K562 (cell line): ENCODE measurements at regions of chr7 and their contacts with region 1.

Region 1: DNA sequence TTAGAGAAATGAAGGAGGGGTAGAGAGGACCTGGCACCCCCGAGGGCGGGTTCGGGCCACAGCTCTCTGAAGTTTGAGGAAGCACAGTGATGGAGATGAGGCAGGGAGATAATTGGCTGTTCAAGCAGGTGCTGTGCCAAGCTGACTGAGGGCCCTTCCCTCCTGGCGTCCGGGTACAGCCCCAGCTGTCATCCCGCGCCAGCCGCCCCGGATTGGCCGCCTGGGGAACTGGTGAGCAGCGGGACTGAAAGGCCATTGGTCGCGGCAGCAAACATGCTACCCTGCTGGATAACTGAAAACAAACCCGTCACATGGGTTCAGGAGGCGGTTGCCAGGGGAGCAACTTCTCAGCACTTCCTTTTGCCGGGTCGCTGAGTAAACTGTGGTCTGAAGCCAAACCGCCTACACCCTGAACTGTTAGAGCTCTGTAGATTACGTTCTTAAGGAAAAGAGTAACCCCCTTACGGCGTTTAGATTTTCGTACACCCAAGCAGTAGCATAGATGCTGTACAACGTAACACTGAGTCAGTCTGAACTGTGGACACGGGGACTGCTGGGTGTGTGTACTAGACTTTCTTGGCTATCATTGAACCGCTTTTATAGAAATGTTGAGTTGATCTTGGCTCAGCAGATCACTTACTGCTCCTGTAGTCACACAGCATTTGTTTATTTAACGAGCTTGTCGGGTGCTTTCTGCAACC is 1.3 kb downstream of the INSIG1 start:
- DNase-seq: peak; percentile 90 to 95 (median 92)
- ATAC-seq: peak; percentile 75
- H3K4me3 ChIP-seq: peak overlapping the region; percentile 76
- H3K27ac ChIP-seq: peak overlapping the region; percentile 69
- H3K4me1 ChIP-seq: peaks cover 46 to 54% of the 10 kb centered on the region in 2 experiments
- H3K27me3 ChIP-seq: no peaks in the 10 kb centered on the region
- CTCF ChIP-seq: no peak
- EP300 ChIP-seq: peak; percentile 3; the same call in 1 of the 2 replicates
- POLR2A ChIP-seq: peak; percentile 37; the same call in 1 of the 2 replicates
- RAD21 ChIP-seq: no peak

Region 2: DNA sequence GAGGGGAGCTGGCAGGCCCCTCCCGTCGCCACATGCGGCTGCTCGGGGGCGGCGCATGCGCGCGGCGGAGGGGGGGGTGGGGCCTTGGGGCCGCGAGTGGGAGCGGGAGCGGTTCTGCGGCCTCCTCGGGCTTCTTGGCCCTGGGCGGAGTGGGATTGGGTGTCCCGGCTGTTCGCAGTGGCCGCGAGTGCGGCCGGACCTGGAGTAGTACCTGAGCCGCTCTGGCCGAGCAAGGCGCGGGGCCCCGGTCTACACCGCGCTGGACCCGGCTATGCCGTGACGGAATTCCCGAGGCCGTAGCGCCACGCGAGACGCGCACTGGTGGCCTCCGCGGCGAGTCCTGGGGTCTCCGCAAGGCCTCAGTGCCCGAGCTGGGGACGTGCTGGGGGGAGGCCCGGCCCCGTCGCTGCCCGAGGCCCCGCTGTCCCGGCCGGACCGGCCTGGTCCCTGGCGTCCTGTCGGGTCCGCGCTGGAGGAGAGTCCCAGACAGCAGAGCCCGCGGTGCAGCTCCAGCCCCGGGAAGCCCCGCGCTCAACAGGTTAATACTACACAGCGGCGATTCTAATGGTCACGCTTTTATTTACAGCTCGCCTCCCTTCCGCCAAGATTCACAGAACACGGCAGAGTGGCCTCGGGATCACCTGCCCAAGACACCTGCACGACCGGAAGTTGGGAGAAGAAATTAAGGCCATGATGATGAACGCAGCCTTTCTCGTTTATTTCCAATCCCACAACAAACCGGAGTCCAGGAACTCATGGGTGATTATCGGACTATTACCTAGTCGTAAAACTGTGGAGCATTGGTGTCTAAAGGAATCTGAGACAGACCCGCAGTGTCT is 295.4 kb before region 1 on chr7:
- CTCF ChIA-PET with region 1: no interaction called
- POLR2A ChIA-PET with region 1: no interaction called
- in situ Hi-C with region 1: no loop called
- intact Hi-C with region 1: loop called (anchors 5 kb)
- DNase-seq: peak; percentile 90 to 99 (median 99)
- ATAC-seq: peak; percentile 82
- H3K4me3 ChIP-seq: peak overlapping the region; percentile 84
- H3K27ac ChIP-seq: peak overlapping the region; percentile 95
- H3K4me1 ChIP-seq: peaks cover 17 to 19% of the 10 kb centered on the region in 2 experiments
- H3K27me3 ChIP-seq: no peaks in the 10 kb centered on the region
- CTCF ChIP-seq: no peak
- EP300 ChIP-seq: no peak
- POLR2A ChIP-seq: peak; percentile 90
- RAD21 ChIP-seq: no peak

Region 3: DNA sequence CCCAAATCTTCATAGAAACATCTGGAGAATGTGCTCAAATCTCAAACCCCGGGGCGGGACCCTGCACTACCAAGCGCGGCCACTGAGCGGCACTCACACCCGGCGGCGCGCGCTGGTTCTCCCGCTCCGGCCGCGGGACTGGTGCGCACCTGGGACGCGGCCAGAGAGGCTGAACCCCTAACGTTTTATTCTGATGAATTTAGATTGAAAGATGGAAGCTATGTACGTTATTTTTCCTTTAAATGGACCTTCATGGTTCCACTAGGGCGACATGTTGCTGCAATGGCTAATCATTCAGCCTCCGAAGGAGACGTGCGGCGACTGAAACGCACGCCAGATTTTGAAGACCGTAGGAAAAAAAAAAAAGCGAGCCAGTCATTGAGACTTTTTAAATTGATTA is 108.3 kb before region 1 on chr7:
- CTCF ChIA-PET with region 1: interaction called, 5 read pairs
- POLR2A ChIA-PET with region 1: no interaction called
- in situ Hi-C with region 1: no loop called
- intact Hi-C with region 1: loop called (anchors 2 kb)
- DNase-seq: peak; percentile 72 to 92 (median 89)
- ATAC-seq: peak; percentile 93
- H3K4me3 ChIP-seq: no peak overlapping the region
- H3K27ac ChIP-seq: no peak overlapping the region
- H3K4me1 ChIP-seq: peaks cover 0 to 7% of the 10 kb centered on the region in 2 experiments; a peak in 2 of 5 replicates
- H3K27me3 ChIP-seq: peaks cover 36 to 62% of the 10 kb centered on the region in 2 experiments
- CTCF ChIP-seq: peak; percentile 92 to 97 (median 95)
- EP300 ChIP-seq: no peak
- POLR2A ChIP-seq: no peak
- RAD21 ChIP-seq: peak; percentile 96 to 97

Region 4: GRCh38 chr7:155205368-155206317 is 93.3 kb before region 1 on chr7:
- CTCF ChIA-PET with region 1: no interaction called
- POLR2A ChIA-PET with region 1: interaction called, 26 read pairs
- in situ Hi-C with region 1: loop called (anchors 5 kb)
- intact Hi-C with region 1: loop called (anchors 1 kb)
- DNase-seq: peak; percentile 99 to 100 (median 100)
- ATAC-seq: peak; percentile 94
- H3K4me3 ChIP-seq: peak overlapping the region; percentile 56
- H3K27ac ChIP-seq: peak overlapping the region; percentile 100
- H3K4me1 ChIP-seq: peaks cover 25 to 67% of the 10 kb centered on the region in 2 experiments
- H3K27me3 ChIP-seq: no peaks in the 10 kb centered on the region; a peak in 1 of 5 replicates
- CTCF ChIP-seq: peak in 1 of 3 experiments; percentile 29; a peak in 1 of 6 replicates
- EP300 ChIP-seq: peak; percentile 82
- POLR2A ChIP-seq: peak; percentile 96
- RAD21 ChIP-seq: peak; percentile 22 to 36; a peak in 3 of 4 replicates

Region 5: DNA sequence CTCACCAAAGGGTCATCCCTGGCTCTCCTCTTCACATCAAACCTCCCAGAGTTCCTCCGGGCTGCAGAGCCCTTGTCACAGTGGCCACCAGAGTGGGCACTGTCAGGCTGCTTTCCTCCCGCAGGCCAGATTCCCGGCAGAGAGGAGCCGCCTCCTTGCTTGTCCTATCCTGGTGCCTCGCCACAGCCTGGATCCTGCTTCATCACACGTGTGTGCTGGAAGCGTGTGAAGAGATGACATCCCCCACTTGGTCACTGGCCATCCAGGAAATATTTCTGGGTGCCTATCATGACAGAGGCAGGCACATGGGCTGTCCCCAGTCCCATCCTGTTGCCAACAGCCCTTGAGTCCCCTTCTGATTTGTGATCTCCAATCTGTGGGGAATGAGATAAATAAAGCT is 13.6 kb after region 1 on chr7:
- CTCF ChIA-PET with region 1: no interaction called
- POLR2A ChIA-PET with region 1: interaction called, 18 read pairs
- in situ Hi-C with region 1: no loop called
- intact Hi-C with region 1: no loop called
- DNase-seq: no peak
- ATAC-seq: peak; percentile 7; the same call in 1 of the 3 replicates
- H3K4me3 ChIP-seq: no peak overlapping the region
- H3K27ac ChIP-seq: no peak overlapping the region
- H3K4me1 ChIP-seq: peaks cover 9 to 20% of the 10 kb centered on the region in 2 experiments; a peak in 4 of 5 replicates
- H3K27me3 ChIP-seq: peaks cover 3 to 36% of the 10 kb centered on the region in 2 experiments; a peak in 4 of 5 replicates
- CTCF ChIP-seq: no peak
- EP300 ChIP-seq: no peak
- POLR2A ChIP-seq: no peak
- RAD21 ChIP-seq: no peak

Region 6: GRCh38 chr7:155322530-155322929 is 23.5 kb after region 1 on chr7:
- CTCF ChIA-PET with region 1: no interaction called
- POLR2A ChIA-PET with region 1: interaction called, 12 read pairs
- in situ Hi-C with region 1: no loop called
- intact Hi-C with region 1: loop called (anchors 1 kb)
- DNase-seq: no peak
- ATAC-seq: no peak
- H3K4me3 ChIP-seq: no peak overlapping the region
- H3K27ac ChIP-seq: no peak overlapping the region
- H3K4me1 ChIP-seq: peaks cover 4 to 16% of the 10 kb centered on the region in 2 experiments
- H3K27me3 ChIP-seq: peaks cover 0 to 21% of the 10 kb centered on the region in 2 experiments; a peak in 3 of 5 replicates
- CTCF ChIP-seq: no peak
- EP300 ChIP-seq: no peak
- POLR2A ChIP-seq: no peak
- RAD21 ChIP-seq: no peak

Region 7: DNA sequence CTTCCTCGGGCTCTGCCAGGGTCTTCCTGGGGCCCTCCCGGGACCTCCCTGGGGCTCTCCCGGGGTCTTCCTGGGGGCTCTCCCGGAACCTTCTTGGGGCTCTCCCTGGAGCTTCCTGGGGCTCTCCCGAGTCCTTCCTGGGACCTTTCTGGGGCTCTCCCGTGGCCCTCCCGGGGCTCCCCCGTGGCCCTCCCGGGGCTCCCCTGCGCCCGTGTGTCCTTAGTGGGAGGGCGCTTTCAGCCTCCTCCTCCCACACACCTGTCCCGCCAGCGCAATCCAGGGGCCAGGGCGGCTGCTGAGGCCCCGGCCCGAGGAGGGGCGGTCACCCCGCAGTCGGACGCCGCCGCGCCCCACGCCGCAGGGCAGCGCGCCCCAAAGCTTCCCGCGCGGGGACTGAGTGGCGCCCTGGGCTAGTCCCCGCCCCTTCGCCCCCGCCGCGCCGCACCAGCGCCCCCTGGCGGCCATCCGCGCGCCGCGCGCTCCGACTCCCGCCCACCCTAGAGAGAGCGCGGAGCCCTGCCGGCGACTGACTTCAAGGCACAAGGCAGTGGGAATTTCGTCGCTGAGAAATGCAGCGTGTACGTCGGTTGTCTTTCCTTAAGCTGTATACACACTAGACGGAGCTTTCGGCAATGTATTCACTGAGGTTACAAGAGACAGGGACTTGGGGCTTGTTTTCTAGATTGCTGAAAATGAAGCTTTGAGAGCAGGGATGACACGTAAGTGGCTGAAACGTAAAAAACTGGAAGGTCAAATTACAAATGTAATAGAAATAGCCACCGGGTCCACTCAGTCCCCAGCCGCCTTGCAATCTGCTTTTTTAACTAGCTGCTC is 45.8 kb after region 1 on chr7:
- CTCF ChIA-PET with region 1: no interaction called
- POLR2A ChIA-PET with region 1: no interaction called
- in situ Hi-C with region 1: no loop called
- intact Hi-C with region 1: loop called (anchors 2 kb)
- DNase-seq: peak; percentile 90 to 99 (median 96)
- ATAC-seq: peak; percentile 98
- H3K4me3 ChIP-seq: peak overlapping the region; percentile 46
- H3K27ac ChIP-seq: no peak overlapping the region
- H3K4me1 ChIP-seq: peaks cover 0 to 17% of the 10 kb centered on the region in 2 experiments; a peak in 3 of 5 replicates
- H3K27me3 ChIP-seq: peaks cover 29 to 48% of the 10 kb centered on the region in 2 experiments
- CTCF ChIP-seq: peak; percentile 86 to 97 (median 96)
- EP300 ChIP-seq: no peak
- POLR2A ChIP-seq: no peak
- RAD21 ChIP-seq: peak; percentile 95 to 96

Region 8: DNA sequence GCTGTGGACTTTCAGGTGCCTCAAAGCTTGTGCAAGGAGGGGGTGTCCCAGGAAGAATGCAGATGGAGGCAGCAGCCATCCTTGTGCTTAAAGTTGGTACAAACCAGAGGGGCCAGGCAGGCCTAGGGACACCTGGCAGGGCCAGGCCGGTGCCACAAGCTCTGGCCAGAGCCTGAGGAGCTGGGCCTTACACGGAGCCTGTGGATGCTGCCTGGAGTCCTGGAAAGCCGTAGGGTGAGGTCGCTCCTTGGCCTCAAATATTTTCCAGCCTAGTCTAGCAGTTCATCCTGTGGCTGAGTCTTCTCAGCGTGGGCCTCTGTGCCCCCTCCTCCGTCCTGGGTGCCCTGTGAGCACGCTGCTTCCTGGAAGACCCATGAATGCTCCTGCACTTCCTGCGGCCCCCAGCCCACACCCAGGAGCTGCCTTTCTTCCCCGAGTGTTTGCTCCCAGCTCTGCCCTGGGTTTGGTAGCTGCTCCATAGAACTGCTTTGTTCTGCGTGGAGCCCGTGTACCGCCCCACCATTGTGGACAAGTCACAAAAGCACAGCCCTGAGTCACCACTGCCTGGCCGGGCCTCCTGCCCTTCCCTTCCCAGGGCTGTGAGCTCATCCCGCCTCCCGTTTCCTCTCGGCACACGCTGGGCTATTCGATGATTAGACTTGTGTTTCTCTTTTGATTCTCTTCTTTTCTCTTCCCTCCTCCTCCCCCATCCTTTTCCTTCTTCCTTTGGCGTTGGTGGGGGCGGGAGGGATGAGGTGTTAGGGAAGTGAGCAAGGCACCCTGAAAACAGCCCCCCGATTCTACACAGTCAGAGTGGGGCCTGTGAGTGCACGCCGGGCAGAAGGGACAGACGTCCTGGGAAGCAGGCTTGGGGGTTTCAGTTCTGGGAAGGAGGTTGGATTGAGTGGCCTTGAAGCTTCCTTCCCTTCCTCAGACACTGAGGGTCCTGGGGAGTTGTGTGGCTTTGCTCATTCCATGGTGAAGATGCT is 586.5 kb after region 1 on chr7:
- CTCF ChIA-PET with region 1: no interaction called
- POLR2A ChIA-PET with region 1: no interaction called
- in situ Hi-C with region 1: no loop called
- intact Hi-C with region 1: no loop called
- DNase-seq: no peak
- ATAC-seq: no peak; the same call in 2 of the 3 replicates
- H3K4me3 ChIP-seq: no peak overlapping the region
- H3K27ac ChIP-seq: no peak overlapping the region
- H3K4me1 ChIP-seq: no peaks in the 10 kb centered on the region; a peak in 1 of 5 replicates
- H3K27me3 ChIP-seq: peaks cover 68 to 92% of the 10 kb centered on the region in 2 experiments
- CTCF ChIP-seq: no peak
- EP300 ChIP-seq: no peak
- POLR2A ChIP-seq: no peak
- RAD21 ChIP-seq: no peak